ENCODE measurements at regions of chr19 and their contacts with region 1.

Region 1: DNA sequence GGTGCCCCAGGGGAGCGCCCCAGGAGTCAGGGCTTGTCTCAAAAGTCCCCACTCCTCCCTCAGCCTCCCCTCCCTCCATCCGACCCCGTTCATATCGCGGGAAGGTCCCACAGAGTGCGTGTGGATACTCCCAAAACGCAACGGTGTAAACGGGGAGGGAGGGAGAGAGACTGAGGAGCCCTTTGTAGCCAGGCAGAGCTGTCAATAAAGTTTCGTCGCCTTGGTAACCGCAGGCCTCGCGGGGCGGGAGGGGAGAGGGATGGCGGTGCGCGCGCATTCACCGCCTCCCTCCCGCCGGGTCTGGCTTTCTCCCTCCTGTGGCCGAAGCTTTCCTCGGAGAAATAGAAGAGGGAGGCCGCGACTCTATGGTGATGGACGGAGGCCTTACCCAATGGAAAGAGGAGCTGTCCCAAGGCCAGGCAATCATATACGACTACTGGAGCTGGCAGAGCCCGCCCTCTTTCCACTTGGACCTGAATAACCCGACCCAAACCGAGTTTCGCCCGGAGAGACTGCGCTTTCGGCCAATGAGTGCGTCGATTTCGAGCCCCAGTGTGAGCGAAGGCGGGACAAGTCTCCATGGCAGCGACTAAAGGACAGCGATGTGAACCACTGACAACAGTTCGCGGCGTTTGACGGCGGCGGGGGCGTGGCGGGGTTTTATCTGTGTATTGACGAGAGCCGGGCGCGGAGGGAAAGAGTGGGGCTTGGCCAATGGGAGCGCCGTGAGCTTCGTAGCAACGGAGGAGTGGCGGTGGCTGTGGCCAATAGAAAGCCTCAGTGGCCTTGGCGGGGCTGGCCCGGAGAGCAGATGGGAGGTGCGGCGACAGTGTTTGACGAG is at the start of gene KMT5C:
- DNase-seq: peak; percentile 100
- ATAC-seq: peak; percentile 94 to 95
- H3K4me3 ChIP-seq: peak within 1 kb of the TSS; percentile 65 to 82 (median 75)
- H3K27ac ChIP-seq: peak within 1 kb of the TSS; percentile 83 to 97 (median 91)
- H3K4me1 ChIP-seq: peaks cover 12 to 22% of the 10 kb centered on the region in 2 donors
- H3K27me3 ChIP-seq: peaks cover 0 to 10% (median 7%) of the 10 kb centered on the region in 3 donors
- CTCF ChIP-seq: peak in 4 of 5 experiments; percentile 38 to 65 (median 52)
- POLR2A ChIP-seq: peak in 1 of 2 donors; percentile 85
- total RNA-seq, gene KMT5C: 2.5 to 5.4 (median 4.5) TPM

Region 2: DNA sequence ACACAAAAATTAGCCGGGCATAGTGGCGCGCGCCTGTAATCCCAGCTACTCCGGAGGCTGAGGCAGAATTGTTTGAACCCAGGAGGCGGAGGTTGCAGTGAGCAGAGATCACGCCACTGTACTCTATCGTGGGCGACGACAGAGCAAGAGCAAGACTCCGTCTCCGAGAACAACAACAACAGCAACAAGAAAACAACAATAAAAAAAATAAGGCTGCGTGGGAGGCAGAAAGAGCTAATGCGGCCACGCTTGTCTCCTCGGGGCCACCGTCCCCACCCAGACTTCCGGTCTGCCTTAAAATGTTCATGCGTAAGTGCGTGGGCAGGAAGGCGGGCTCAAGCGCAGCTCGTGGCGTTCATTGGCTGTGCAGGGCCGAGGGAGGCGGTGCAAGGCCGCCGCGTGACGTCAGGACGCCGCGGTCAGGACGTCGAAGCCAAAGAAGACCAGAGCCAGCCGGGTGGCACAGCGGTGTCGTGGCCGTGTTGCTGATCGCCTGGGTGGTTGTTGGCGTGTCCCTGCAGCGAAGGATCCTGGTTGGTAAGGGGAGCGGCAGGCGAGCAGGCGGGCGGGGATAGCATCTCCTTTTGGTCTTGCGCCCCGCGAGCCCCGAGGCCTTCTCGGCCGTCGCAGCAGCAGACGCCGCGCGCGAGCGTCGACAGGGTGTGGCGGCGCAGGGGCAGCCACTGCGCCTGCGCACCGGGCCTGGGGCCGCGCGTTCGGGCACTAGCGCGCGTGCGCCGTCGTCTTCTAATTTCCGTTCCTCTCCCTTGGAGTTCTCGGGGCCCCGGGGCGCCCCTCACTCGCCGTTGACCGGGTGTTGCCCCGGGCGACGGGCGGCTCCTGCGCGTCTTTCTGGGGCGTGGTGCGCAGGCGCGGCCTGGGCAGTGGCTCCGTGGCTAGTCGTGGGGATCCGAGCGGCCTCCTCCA is 890.2 kb before region 1 on chr19 and contains the start of gene LENG8:
- in situ Hi-C with region 1: no loop called
- intact Hi-C with region 1: loop called (anchors 1 kb)
- DNase-seq: peak; percentile 97 to 98
- ATAC-seq: peak; percentile 95 to 96
- H3K4me3 ChIP-seq: peak within 1 kb of the TSS; percentile 87 to 95 (median 90)
- H3K27ac ChIP-seq: peak within 1 kb of the TSS; percentile 92 to 98 (median 93)
- H3K4me1 ChIP-seq: peaks cover 22 to 31% of the 10 kb centered on the region in 2 donors
- H3K27me3 ChIP-seq: no peaks in the 10 kb centered on the region
- CTCF ChIP-seq: no peak
- POLR2A ChIP-seq: peak; percentile 89 to 95
- total RNA-seq, gene LENG8: 9.9 to 49.5 (median 15.5) TPM

Region 3: GRCh38 chr19:55032121-55032786 is 307.0 kb before region 1 on chr19:
- in situ Hi-C with region 1: no loop called
- intact Hi-C with region 1: no loop called
- DNase-seq: no peak
- ATAC-seq: no peak
- H3K4me3 ChIP-seq: no peak overlapping the region
- H3K27ac ChIP-seq: no peak overlapping the region
- H3K4me1 ChIP-seq: no peaks in the 10 kb centered on the region
- H3K27me3 ChIP-seq: no peaks in the 10 kb centered on the region
- CTCF ChIP-seq: no peak
- POLR2A ChIP-seq: no peak

Region 4: DNA sequence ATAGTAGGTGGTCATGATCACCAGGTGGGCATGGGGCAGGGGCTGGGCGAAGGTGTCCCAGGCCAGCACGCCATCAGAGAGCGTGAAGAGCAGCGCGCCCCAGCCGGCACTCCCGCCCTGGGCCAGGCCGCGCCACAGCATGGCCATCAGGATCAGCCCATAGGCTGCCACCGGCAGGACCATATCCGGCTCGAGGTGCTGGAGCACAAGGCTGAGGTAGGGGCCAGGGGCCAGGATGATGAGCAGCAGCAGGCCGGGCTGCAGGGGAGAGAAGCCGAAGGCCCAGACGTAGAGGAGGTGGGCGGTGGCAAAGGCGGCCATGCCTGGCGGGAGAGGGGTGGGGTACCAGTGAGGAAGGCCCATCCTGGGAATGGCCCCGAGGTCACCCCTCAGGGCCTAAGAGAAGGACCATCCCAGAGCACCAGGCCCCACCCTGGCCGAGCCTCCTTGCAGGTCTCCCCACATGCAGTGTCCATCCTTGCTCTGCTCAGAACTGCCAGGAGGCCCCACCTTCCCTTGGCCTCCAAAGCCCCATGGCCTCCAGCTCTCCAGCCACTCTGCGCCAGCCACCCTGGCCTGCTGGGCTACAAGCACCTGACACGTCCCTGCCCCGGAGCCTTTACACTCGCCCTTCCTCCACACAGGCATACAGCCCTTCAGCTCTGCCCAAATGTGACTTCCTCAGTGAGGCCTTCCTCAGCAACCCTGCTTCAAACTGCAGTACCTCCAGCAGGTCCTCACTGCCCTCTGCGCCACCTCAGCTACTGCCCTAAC is 111.8 kb before region 1 on chr19:
- in situ Hi-C with region 1: no loop called
- intact Hi-C with region 1: no loop called
- DNase-seq: no peak
- ATAC-seq: no peak
- H3K4me3 ChIP-seq: no peak overlapping the region
- H3K27ac ChIP-seq: no peak overlapping the region
- H3K4me1 ChIP-seq: no peaks in the 10 kb centered on the region
- H3K27me3 ChIP-seq: no peaks in the 10 kb centered on the region
- CTCF ChIP-seq: no peak
- POLR2A ChIP-seq: no peak

Region 5: DNA sequence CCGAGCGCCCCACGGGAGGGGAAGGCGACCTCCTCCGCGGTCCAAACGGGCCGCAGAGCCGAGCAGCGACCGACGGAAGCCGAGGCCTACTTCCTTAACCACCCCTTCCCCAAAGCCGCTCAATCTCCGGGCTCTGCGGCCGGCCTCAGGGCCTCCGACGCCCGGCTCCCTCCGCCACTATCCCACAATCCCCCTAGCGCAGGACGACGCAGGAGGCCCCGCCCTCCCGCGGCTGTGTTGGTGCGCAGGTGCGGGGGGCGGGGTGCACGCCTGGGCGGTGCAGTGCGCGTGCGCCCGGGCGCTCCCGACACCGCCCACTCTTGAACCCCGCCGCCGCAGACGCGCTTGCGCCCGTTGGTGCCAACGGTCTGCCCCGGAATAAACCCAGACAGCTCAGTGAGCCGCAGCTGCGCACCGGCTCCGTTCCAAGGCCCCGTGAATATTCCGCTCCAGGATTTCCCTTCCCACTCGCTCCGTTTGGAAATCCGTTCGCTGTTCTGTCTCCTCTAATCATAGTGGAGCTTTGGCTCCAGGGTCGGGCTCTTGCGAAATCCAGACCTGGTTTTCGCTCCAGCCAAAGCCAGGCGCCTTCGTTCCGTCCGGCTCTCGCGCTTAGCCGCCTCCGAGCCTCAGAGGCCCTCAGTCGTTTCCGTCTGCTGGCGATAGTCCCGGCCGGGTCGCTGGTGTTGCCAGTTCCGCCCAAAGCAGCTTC is 80.3 kb before region 1 on chr19 and contains the start of gene PPP6R1:
- in situ Hi-C with region 1: no loop called
- intact Hi-C with region 1: loop called (anchors 1 kb)
- DNase-seq: peak; percentile 95 to 99
- ATAC-seq: peak; percentile 97 to 98
- H3K4me3 ChIP-seq: peak within 1 kb of the TSS; percentile 74 to 90 (median 80)
- H3K27ac ChIP-seq: peak within 1 kb of the TSS; percentile 89 to 97 (median 94)
- H3K4me1 ChIP-seq: peaks cover 42 to 49% of the 10 kb centered on the region in 2 donors
- H3K27me3 ChIP-seq: no peaks in the 10 kb centered on the region
- CTCF ChIP-seq: peak in 2 of 5 experiments; percentile 38 to 52
- POLR2A ChIP-seq: peak; percentile 86 to 88
- total RNA-seq, gene PPP6R1: 14.6 to 47.9 (median 39.6) TPM

Region 6: GRCh38 chr19:55301459-55302317 is 37.6 kb before region 1 on chr19:
- in situ Hi-C with region 1: no loop called
- intact Hi-C with region 1: loop called (anchors 2 kb)
- DNase-seq: peak; percentile 53 to 72
- ATAC-seq: peak; percentile 79 to 80
- H3K4me3 ChIP-seq: peak overlapping the region; percentile 49 to 57 (median 52)
- H3K27ac ChIP-seq: no peak overlapping the region
- H3K4me1 ChIP-seq: peaks cover 0 to 4% of the 10 kb centered on the region in 2 donors
- H3K27me3 ChIP-seq: no peaks in the 10 kb centered on the region
- CTCF ChIP-seq: peak; percentile 69 to 97 (median 94)
- POLR2A ChIP-seq: no peak

Region 7: DNA sequence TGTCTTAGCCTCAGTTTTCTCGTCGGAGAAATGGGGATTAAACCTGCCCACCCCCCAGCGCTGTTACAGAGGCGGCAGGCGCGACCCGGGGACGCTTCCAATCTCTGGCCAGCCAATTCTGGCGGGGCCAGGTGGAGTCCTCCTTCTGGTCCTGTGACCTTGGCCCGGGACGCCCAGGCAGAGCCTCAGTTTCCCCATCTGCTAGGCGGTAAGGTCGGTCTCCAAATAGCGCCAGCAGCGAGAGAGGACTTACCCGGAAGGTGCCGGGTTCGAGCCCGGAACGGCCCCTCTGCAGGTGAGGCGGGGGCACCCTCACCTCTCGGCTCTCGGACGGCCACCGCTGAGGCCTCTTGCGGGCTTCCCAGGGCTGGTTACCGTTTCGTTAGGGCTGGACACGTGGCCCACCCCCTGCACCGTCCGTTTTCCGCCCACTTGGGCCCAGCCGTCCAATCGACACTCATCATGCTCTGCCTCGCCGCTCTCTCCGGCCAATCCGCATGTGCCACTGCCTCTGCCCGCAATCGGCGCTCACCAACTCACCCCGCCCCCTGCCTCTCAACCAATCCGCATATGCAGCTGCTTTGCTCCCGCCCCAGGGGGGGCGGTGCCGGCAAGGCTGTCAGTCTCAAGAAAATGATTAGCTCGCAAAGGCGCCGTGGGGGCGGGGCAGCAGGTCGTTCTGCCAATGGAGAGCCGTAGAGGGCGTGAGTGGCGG is 122.1 kb after region 1 on chr19 and contains the start of gene ISOC2:
- in situ Hi-C with region 1: no loop called
- intact Hi-C with region 1: loop called (anchors 1 kb)
- DNase-seq: peak; percentile 100
- ATAC-seq: peak; percentile 96 to 97
- H3K4me3 ChIP-seq: peak within 1 kb of the TSS; percentile 76 to 94 (median 86)
- H3K27ac ChIP-seq: peak within 1 kb of the TSS; percentile 89 to 97 (median 94)
- H3K4me1 ChIP-seq: peaks cover 12 to 13% of the 10 kb centered on the region in 2 donors
- H3K27me3 ChIP-seq: no peaks in the 10 kb centered on the region
- CTCF ChIP-seq: no peak
- POLR2A ChIP-seq: peak; percentile 77 to 82
- total RNA-seq, gene ISOC2: 59.7 to 101 (median 88.7) TPM

Measured in gastrocnemius medialis (tissue), 4 donors.